Naive thymus-derived CD4-positive, alpha-beta T cell (primary cell): ENCODE measurements at regions of chr7 and their contacts with region 1.

Region 1: DNA sequence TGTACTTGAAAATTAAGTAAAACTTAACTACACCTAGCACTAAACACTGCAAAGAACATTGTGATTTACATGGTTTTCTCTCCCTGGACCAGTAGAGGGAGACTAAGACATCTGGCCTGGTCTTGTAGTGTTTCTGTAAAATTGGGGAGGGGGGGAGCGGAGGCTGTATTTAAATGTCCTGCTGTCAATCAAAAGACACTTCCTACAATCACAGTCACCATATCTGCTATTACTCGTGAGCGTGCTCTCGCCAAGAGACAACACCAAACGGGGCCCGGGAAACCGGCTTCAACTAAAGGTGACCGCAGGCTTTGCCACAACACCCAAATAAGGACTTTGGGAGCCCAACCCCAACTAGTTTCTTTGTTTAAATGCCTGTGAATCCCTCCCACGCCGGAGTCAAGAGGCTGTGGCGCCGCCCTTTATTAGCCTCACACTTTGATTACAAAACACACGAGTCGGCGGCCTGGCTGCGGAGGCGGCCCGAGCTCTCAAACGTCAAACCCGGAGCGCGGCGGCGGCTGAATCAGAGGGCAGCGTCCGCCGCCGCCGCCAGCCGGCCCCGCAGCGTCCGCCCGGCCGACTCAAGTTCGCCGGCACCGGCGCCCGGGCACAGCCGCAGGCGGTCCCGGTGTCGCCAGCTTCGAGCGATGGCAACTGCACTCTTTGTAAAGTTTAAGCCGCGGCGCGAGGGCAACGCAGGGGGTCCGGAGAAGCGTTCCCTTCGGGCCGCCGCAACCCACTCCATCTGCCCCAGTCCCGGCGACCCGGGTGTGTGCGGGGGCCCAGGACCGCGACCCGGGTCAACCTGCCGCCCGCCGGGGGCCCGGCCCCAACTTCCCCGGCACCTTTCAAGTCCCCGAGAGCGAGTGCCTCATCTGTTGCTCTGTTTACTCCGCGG is 1.3 kb downstream of the KDM7A start:
- DNase-seq: peak; percentile 69 to 95 (median 92)
- ATAC-seq: peak; percentile 73
- H3K4me3 ChIP-seq: peak overlapping the region; percentile 63
- H3K4me3 Mint-ChIP-seq: peak overlapping the region; percentile 68 to 94 (median 89)
- H3K27ac ChIP-seq: peak overlapping the region; percentile 92
- H3K27ac Mint-ChIP-seq: peak overlapping the region; percentile 81 to 98 (median 93)
- H3K4me1 ChIP-seq: peaks cover 25 to 26% of the 10 kb centered on the region in 2 donors
- H3K4me1 Mint-ChIP-seq: peaks cover 29 to 61% (median 52%) of the 10 kb centered on the region in 7 donors
- H3K27me3 ChIP-seq: no peaks in the 10 kb centered on the region
- H3K27me3 Mint-ChIP-seq: peaks cover 0 to 4% (median 0%) of the 10 kb centered on the region in 5 donors

Region 2: DNA sequence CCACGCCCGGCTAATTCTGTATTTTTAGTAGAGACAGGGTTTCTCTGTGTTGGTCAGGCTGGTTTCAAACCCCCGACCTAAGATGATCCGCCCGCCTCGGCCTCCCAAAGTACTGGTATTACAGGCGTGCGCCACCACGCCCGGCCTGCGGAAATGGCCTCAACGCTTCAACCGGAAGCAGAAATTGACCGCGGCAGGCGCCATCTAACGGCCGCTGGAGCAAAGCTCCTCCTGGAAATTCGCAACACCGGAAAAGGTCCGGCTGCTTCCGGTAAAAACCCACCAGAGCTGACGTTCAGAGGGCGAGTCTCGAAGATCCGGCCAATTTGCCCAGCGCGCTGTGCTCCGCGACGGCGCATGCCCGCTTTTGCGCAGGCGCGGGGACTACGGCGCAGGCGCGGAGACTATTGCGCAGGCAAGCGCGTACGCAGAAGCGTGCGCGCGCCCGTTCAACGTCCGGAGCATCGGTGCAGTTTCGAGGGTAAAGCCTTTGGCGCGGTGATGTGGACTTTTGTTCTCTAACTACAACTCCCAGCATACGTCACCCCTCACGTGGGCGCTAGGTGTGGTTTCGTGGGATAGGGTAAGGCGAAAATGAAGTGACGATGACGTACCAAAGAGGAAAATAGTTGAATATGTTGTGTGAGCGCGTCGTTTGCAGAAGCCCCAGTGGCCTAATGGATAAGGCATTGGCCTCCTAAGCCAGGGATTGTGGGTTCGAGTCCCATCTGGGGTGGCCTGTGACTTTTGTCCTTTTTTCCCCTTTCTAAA is 835.2 kb before region 1 on chr7:
- CTCF ChIA-PET with region 1: no interaction called
- POLR2A ChIA-PET with region 1: no interaction called
- intact Hi-C with region 1: loop called (anchors 1 kb)
- DNase-seq: peak; percentile 93 to 100 (median 99)
- ATAC-seq: peak; percentile 89
- H3K4me3 ChIP-seq: peak overlapping the region; percentile 95
- H3K4me3 Mint-ChIP-seq: peak overlapping the region; percentile 93 to 100 (median 98)
- H3K27ac ChIP-seq: peak overlapping the region; percentile 100
- H3K27ac Mint-ChIP-seq: peak overlapping the region; percentile 98 to 100 (median 100)
- H3K4me1 ChIP-seq: peaks cover 11 to 13% of the 10 kb centered on the region in 2 donors
- H3K4me1 Mint-ChIP-seq: peaks cover 12 to 49% (median 38%) of the 10 kb centered on the region in 7 donors
- H3K27me3 ChIP-seq: no peaks in the 10 kb centered on the region
- H3K27me3 Mint-ChIP-seq: peaks cover 0 to 9% (median 5%) of the 10 kb centered on the region in 5 donors

Region 3: GRCh38 chr7:139777948-139778841 is 397.3 kb before region 1 on chr7 and contains the start of gene HIPK2:
- CTCF ChIA-PET with region 1: no interaction called
- POLR2A ChIA-PET with region 1: no interaction called
- intact Hi-C with region 1: loop called (anchors 5 to 10 kb)
- DNase-seq: peak; percentile 54 to 75 (median 67)
- ATAC-seq: peak; percentile 79
- H3K4me3 ChIP-seq: peak within 1 kb of the TSS; percentile 85
- H3K4me3 Mint-ChIP-seq: peak within 1 kb of the TSS; percentile 94 to 100 (median 98)
- H3K27ac ChIP-seq: peak within 1 kb of the TSS; percentile 89
- H3K27ac Mint-ChIP-seq: peak within 1 kb of the TSS; percentile 95 to 98 (median 97)
- H3K4me1 ChIP-seq: peaks cover 4 to 26% of the 10 kb centered on the region in 2 donors
- H3K4me1 Mint-ChIP-seq: peaks cover 41 to 53% (median 49%) of the 10 kb centered on the region in 7 donors
- H3K27me3 ChIP-seq: no peaks in the 10 kb centered on the region
- H3K27me3 Mint-ChIP-seq: peaks cover 0 to 24% (median 5%) of the 10 kb centered on the region in 5 donors
- total RNA-seq, gene HIPK2: 27.3 to 44.0 (median 37.3) TPM

Region 4: DNA sequence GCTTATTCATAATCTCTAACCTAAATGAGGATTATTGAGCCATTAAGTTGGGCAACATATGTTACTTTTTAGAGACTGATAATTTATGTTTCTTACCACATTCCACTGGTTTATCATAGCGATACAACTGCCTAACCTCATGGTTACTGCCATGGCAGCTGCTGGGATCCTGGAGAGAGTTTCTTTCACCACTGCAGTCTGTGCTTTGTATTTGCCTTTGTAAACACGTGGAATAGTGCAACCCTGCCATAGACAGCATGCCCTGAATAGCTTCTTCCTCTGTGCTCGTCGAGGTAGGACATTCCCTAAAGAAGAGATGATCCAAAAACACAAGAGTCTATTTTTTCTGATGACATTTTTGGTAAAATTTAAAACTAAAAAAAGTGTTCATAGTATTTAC is 79.0 kb before region 1 on chr7:
- CTCF ChIA-PET with region 1: no interaction called
- POLR2A ChIA-PET with region 1: no interaction called
- intact Hi-C with region 1: no loop called
- DNase-seq: no peak
- ATAC-seq: no peak
- H3K4me3 ChIP-seq: no peak overlapping the region
- H3K4me3 Mint-ChIP-seq: no peak overlapping the region
- H3K27ac ChIP-seq: no peak overlapping the region
- H3K27ac Mint-ChIP-seq: peak overlapping the region in 2 of 9 donors; percentile 9 to 71
- H3K4me1 ChIP-seq: no peaks in the 10 kb centered on the region
- H3K4me1 Mint-ChIP-seq: peaks cover 0 to 5% (median 0%) of the 10 kb centered on the region in 7 donors
- H3K27me3 ChIP-seq: no peaks in the 10 kb centered on the region
- H3K27me3 Mint-ChIP-seq: no peaks in the 10 kb centered on the region

Region 5: DNA sequence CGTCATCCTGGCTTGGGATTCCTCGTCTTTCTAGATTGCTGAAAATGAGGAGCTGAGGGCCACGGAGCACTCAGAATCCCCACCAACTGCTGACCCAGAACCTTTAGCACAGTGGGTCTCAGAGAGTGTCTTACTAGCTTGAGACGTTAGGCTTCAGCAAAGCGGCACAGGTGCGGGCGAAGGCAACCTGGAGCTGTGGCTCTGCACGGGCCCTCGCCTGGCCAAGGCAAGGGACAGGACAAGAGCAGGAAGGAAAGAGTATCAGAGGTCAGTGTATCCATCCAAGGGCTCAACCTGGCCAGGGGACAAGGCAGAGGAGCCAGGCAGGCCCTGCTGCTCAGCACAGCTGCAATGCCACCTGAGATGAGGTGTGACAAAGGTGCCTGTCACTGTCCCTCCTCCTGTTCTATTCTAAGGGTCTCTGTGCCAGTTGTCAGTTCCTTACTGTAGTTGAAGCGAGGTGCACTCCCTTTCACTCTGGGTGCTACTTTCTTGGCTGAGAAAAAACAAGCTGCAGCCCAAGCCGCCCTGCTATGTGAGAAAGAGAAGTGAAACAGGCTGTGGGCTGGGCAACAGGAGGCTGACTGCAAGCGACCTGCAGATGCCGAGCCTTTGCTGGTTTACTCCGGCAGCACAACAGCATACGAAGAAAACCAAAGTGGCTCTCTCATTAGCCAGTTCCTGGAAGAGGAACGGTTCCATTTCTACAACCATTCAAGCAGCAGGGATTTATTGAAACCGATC is 34.6 kb after region 1 on chr7:
- CTCF ChIA-PET with region 1: interaction called, 4 read pairs
- POLR2A ChIA-PET with region 1: interaction called, 79 read pairs
- intact Hi-C with region 1: loop called in 1 of 2 experiments (anchors 1 kb)
- DNase-seq: peak in 6 of 9 donors; percentile 24 to 58 (median 34)
- ATAC-seq: peak; percentile 86
- H3K4me3 ChIP-seq: peak overlapping the region; percentile 29
- H3K4me3 Mint-ChIP-seq: peak overlapping the region; percentile 10 to 82 (median 68)
- H3K27ac ChIP-seq: no peak overlapping the region
- H3K27ac Mint-ChIP-seq: peak overlapping the region; percentile 66 to 96 (median 87)
- H3K4me1 ChIP-seq: peaks cover 17 to 36% of the 10 kb centered on the region in 2 donors
- H3K4me1 Mint-ChIP-seq: peaks cover 37 to 82% (median 58%) of the 10 kb centered on the region in 7 donors
- H3K27me3 ChIP-seq: no peaks in the 10 kb centered on the region
- H3K27me3 Mint-ChIP-seq: no peaks in the 10 kb centered on the region

Region 6: DNA sequence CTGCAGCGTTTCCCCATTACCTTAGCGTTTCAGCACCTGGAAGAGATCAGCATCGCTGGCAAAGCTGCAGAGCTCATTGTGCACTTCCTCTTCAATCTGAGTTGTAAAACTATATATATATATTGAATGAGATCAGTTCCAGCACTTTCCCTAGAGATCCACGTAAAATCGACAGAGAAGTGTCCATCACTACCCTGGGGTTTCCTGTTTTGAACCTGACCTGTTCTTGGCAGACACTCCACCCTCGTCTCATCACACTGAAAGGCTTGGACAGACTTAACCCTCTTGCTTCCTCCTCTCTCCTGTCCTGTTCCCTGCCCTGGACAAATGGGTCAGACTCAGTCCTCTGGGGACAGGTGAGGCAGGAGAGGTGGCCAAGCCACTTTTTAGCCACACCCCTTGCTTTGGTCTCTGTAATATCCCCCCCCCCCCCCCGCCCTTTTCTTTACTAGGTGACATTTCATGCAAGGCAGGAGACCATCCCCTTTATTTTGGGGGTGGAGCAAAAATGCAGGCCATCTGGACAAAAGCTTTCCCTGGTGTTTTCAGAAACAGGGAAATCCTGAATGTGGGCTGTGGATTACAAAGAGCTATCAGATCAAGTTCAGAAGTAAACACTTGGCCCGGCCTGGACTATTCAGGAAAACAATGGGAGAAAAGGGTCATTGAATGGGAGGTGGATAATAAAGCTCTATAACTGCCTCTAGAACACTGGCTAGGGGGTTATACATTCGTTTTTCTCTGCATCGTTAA is 85.1 kb after region 1 on chr7:
- CTCF ChIA-PET with region 1: interaction called, 5 read pairs
- POLR2A ChIA-PET with region 1: interaction called, 44 read pairs
- intact Hi-C with region 1: loop called (anchors 1 kb)
- DNase-seq: no peak
- ATAC-seq: no peak
- H3K4me3 ChIP-seq: no peak overlapping the region
- H3K4me3 Mint-ChIP-seq: peak overlapping the region in 1 of 10 donors; percentile 7
- H3K27ac ChIP-seq: no peak overlapping the region
- H3K27ac Mint-ChIP-seq: peak overlapping the region in 5 of 9 donors; percentile 41 to 89 (median 74)
- H3K4me1 ChIP-seq: peaks cover 18 to 29% of the 10 kb centered on the region in 2 donors
- H3K4me1 Mint-ChIP-seq: peaks cover 29 to 58% (median 47%) of the 10 kb centered on the region in 7 donors
- H3K27me3 ChIP-seq: no peaks in the 10 kb centered on the region
- H3K27me3 Mint-ChIP-seq: peaks cover 0 to 4% (median 0%) of the 10 kb centered on the region in 5 donors

Region 7: GRCh38 chr7:140326116-140326928 is 150.9 kb after region 1 on chr7:
- CTCF ChIA-PET with region 1: no interaction called
- POLR2A ChIA-PET with region 1: interaction called, 3 read pairs
- intact Hi-C with region 1: loop called (anchors 1 kb)
- DNase-seq: peak; percentile 16 to 61 (median 54)
- ATAC-seq: peak; percentile 88
- H3K4me3 ChIP-seq: no peak overlapping the region
- H3K4me3 Mint-ChIP-seq: no peak overlapping the region
- H3K27ac ChIP-seq: no peak overlapping the region
- H3K27ac Mint-ChIP-seq: peak overlapping the region in 1 of 9 donors; percentile 76
- H3K4me1 ChIP-seq: peaks cover 4 to 5% of the 10 kb centered on the region in 2 donors
- H3K4me1 Mint-ChIP-seq: peaks cover 0 to 3% (median 0%) of the 10 kb centered on the region in 7 donors
- H3K27me3 ChIP-seq: no peaks in the 10 kb centered on the region
- H3K27me3 Mint-ChIP-seq: no peaks in the 10 kb centered on the region

Region 8: GRCh38 chr7:140494867-140495266 is 319.4 kb after region 1 on chr7:
- CTCF ChIA-PET with region 1: no interaction called
- POLR2A ChIA-PET with region 1: no interaction called
- intact Hi-C with region 1: loop called in 1 of 2 experiments (anchors 1 kb)
- DNase-seq: no peak
- ATAC-seq: no peak
- H3K4me3 ChIP-seq: no peak overlapping the region
- H3K4me3 Mint-ChIP-seq: no peak overlapping the region
- H3K27ac ChIP-seq: no peak overlapping the region
- H3K27ac Mint-ChIP-seq: no peak overlapping the region
- H3K4me1 ChIP-seq: no peaks in the 10 kb centered on the region
- H3K4me1 Mint-ChIP-seq: peaks cover 0 to 5% (median 0%) of the 10 kb centered on the region in 7 donors
- H3K27me3 ChIP-seq: no peaks in the 10 kb centered on the region
- H3K27me3 Mint-ChIP-seq: peaks cover 0 to 3% (median 0%) of the 10 kb centered on the region in 5 donors